ENCODE measurements at regions of chr10 and their contacts with region 1.

Region 1: GRCh38 chr10:73246783-73247508 is at the start of gene DNAJC9:
- DNase-seq: peak; percentile 90
- ATAC-seq: peak; percentile 91
- H3K4me3 ChIP-seq: peak within 1 kb of the TSS; percentile 67 to 86
- H3K27ac ChIP-seq: peak within 1 kb of the TSS; percentile 92
- H3K4me1 ChIP-seq: peaks cover 19 to 38% of the 10 kb centered on the region in 2 experiments
- H3K27me3 ChIP-seq: no peaks in the 10 kb centered on the region
- CTCF ChIP-seq: 0 out of 6 replicates have a peak, but pooled peaks of 1 of the 3 experiments have one; percentile 8
- POLR2A ChIP-seq: peak; percentile 97
- RAD21 ChIP-seq: no peak
- total RNA-seq, gene DNAJC9: 40.3 TPM

Region 2: DNA sequence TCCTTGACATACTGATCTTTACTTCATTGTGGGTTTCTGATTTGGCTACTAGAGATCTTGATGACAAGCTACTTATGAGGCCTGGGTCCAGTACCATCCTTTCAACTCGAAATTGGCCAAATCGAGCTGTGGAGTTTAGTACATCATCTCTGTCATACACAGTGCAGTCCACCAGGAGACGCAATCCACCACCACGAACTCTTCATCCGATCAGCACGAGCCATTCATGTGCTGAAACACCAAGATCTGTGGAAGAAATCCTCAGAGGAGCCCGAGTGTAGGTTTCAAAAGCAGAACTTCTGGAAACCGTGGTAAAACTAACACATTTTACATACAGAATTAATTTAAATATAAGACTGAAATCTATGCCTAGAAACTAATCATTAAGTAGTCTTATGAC is 14.1 kb before region 1 on chr10:
- CTCF ChIA-PET with region 1: interaction called, 3 read pairs
- POLR2A ChIA-PET with region 1: interaction called, 12 read pairs
- RAD21 ChIA-PET with region 1: no interaction called
- intact Hi-C with region 1: no loop called
- DNase-seq: no peak
- ATAC-seq: peak; percentile 72
- H3K4me3 ChIP-seq: no peak overlapping the region
- H3K27ac ChIP-seq: no peak overlapping the region
- H3K4me1 ChIP-seq: no peaks in the 10 kb centered on the region
- H3K27me3 ChIP-seq: no peaks in the 10 kb centered on the region
- CTCF ChIP-seq: peak in 2 of 3 experiments; percentile 39 to 56; a peak in 4 of 6 replicates
- POLR2A ChIP-seq: no peak
- RAD21 ChIP-seq: 0 out of 2 replicates have a peak, but pooled peaks have one; percentile 37

Region 3: DNA sequence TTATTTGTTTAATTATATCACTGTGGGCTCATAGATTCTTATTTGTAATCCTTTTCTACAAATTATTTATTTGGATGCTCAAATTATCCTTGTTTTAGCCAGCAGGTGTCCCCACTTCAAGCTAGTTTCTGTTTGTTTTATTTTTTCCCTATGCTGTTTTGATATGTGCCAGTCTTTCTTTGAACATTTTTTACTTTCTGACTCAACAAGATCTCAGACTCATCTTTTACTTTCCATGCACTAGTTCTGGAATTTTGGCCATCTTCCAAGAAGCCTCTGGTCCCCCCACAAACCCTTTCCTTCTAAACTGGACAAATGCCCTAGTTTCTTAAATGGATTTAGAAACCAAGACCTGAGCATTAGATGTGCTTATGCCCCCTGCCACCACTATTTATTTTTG is 17.0 kb after region 1 on chr10:
- CTCF ChIA-PET with region 1: interaction called, 5 read pairs
- POLR2A ChIA-PET with region 1: interaction called, 16 read pairs
- RAD21 ChIA-PET with region 1: no interaction called
- intact Hi-C with region 1: no loop called
- DNase-seq: no peak
- ATAC-seq: peak; percentile 35; the same call in 1 of the 2 replicates
- H3K4me3 ChIP-seq: no peak overlapping the region
- H3K27ac ChIP-seq: no peak overlapping the region
- H3K4me1 ChIP-seq: peaks cover 13 to 23% of the 10 kb centered on the region in 2 experiments
- H3K27me3 ChIP-seq: no peaks in the 10 kb centered on the region
- CTCF ChIP-seq: peak; percentile 51 to 71 (median 52); a peak in 4 of 6 replicates
- POLR2A ChIP-seq: no peak
- RAD21 ChIP-seq: peak; percentile 72

Region 4: GRCh38 chr10:73413528-73414229 is 166.7 kb after region 1 on chr10 and contains the start of gene ANXA7:
- CTCF ChIA-PET with region 1: no interaction called
- POLR2A ChIA-PET with region 1: interaction called, 5 read pairs
- RAD21 ChIA-PET with region 1: no interaction called
- intact Hi-C with region 1: loop called (anchors 2 kb)
- DNase-seq: peak; percentile 68
- ATAC-seq: peak; percentile 97
- H3K4me3 ChIP-seq: peak within 1 kb of the TSS; percentile 91 to 96
- H3K27ac ChIP-seq: peak within 1 kb of the TSS; percentile 90
- H3K4me1 ChIP-seq: peaks cover 6 to 21% of the 10 kb centered on the region in 2 experiments
- H3K27me3 ChIP-seq: no peaks in the 10 kb centered on the region
- CTCF ChIP-seq: peak in 1 of 3 experiments; percentile 8; a peak in 1 of 6 replicates
- POLR2A ChIP-seq: peak; percentile 63
- RAD21 ChIP-seq: no peak
- total RNA-seq, gene ANXA7: 105 TPM

Region 5: DNA sequence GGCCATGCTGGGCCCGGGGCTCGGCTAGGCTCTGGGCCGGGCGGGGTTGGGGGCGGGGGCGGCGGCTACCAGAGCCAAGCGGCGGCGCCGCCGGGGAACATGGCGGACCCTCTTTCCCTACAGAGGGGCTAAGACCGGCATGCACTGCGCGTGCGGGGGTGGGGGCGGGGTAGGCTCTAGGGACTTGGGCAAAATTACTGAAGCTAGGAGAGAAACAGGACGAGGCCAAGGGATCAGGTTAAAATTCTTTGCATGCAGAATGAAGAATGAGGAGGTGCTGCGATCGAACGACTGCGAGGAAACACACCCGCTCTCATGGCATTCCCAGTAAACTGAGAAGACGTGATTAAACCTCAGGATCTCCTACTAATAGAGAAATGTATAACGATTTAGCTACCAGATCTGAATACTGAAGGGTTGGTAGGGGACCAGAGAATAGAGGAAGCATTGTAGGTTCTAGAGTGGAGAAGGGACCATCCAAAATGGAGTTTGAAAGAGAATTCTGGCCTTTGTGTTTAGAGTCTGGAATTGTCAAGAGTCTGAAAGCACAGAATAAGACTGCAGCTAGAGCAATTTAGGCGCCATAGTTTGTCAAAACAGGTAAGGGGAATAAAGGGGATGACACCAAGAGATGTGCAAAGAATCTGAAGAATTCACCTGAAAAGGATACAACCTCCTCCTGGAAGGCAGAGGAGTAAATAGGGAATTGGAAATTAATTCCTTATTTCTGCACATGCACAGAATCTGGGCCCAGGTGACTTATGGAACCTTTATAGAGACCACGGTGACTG is 249.1 kb after region 1 on chr10 and contains the start of gene PPP3CB:
- CTCF ChIA-PET with region 1: no interaction called
- POLR2A ChIA-PET with region 1: interaction called, 12 read pairs
- RAD21 ChIA-PET with region 1: no interaction called
- intact Hi-C with region 1: no loop called
- DNase-seq: peak; percentile 94
- ATAC-seq: peak; percentile 87
- H3K4me3 ChIP-seq: peak within 1 kb of the TSS; percentile 94 to 98
- H3K27ac ChIP-seq: peak within 1 kb of the TSS; percentile 97
- H3K4me1 ChIP-seq: peaks cover 13 to 21% of the 10 kb centered on the region in 2 experiments; a peak in 3 of 4 replicates
- H3K27me3 ChIP-seq: no peaks in the 10 kb centered on the region
- CTCF ChIP-seq: no peak
- POLR2A ChIP-seq: no peak
- RAD21 ChIP-seq: no peak
- total RNA-seq, gene PPP3CB: 32.0 TPM

Region 6: GRCh38 chr10:73625884-73626752 is 379.2 kb after region 1 on chr10:
- CTCF ChIA-PET with region 1: no interaction called
- POLR2A ChIA-PET with region 1: interaction called, 3 read pairs
- RAD21 ChIA-PET with region 1: no interaction called
- intact Hi-C with region 1: loop called (anchors 5 kb)
- DNase-seq: peak; percentile 95
- ATAC-seq: peak; percentile 96
- H3K4me3 ChIP-seq: peak overlapping the region; percentile 72 to 98
- H3K27ac ChIP-seq: peak overlapping the region; percentile 78
- H3K4me1 ChIP-seq: peaks cover 0 to 9% of the 10 kb centered on the region in 2 experiments; a peak in 2 of 4 replicates
- H3K27me3 ChIP-seq: no peaks in the 10 kb centered on the region
- CTCF ChIP-seq: no peak
- POLR2A ChIP-seq: peak; percentile 88
- RAD21 ChIP-seq: no peak

Region 7: DNA sequence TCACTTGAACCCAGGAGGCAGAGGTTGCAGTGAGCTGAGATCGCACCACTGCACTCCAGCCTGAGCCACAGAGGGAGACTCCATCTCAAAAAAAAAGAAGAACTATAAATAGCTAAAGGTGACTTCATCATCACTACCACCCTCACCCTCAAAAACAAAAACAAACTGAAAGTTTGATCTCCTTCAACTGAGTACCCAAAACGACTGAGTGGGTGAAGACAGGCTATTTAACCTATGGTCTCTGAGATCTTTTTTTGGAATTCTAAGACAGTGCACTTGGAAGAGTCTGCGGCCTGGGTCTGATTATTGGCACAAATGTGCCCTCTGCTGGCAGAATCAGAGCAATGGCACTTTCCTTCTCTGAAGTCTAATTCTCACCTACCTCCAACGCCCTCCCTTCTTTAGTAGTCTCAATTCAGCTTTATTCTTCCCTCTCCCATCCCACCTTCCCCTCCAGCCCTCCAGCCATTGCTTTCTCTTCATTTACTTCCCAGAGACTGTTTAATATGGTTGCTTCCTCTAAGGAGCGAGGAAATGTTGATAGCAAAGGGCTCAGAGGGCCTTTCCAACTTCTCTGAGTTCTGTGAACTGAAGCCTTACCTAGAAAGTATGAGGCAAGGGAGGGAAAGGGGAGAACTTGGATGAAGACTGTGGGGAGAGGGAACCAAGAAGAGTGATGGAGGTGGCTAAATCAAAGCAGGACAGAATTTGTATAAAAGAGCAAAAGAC is 397.2 kb after region 1 on chr10:
- CTCF ChIA-PET with region 1: no interaction called
- POLR2A ChIA-PET with region 1: interaction called, 3 read pairs
- RAD21 ChIA-PET with region 1: no interaction called
- intact Hi-C with region 1: loop called (anchors 5 kb)
- DNase-seq: peak; percentile 58
- ATAC-seq: peak; percentile 93
- H3K4me3 ChIP-seq: no peak overlapping the region
- H3K27ac ChIP-seq: no peak overlapping the region
- H3K4me1 ChIP-seq: peaks cover 0 to 9% of the 10 kb centered on the region in 2 experiments; a peak in 3 of 4 replicates
- H3K27me3 ChIP-seq: no peaks in the 10 kb centered on the region
- CTCF ChIP-seq: peak; percentile 75 to 93 (median 87)
- POLR2A ChIP-seq: no peak
- RAD21 ChIP-seq: peak; percentile 99

Measured in HCT116 (cell line).